ENCODE measurements at regions of chr4 and their contacts with region 1.

Region 1: GRCh38 chr4:13654158-13654797 is 26.8 kb upstream of the BOD1L1 start:
- DNase-seq: peak; percentile 92

Region 2: DNA sequence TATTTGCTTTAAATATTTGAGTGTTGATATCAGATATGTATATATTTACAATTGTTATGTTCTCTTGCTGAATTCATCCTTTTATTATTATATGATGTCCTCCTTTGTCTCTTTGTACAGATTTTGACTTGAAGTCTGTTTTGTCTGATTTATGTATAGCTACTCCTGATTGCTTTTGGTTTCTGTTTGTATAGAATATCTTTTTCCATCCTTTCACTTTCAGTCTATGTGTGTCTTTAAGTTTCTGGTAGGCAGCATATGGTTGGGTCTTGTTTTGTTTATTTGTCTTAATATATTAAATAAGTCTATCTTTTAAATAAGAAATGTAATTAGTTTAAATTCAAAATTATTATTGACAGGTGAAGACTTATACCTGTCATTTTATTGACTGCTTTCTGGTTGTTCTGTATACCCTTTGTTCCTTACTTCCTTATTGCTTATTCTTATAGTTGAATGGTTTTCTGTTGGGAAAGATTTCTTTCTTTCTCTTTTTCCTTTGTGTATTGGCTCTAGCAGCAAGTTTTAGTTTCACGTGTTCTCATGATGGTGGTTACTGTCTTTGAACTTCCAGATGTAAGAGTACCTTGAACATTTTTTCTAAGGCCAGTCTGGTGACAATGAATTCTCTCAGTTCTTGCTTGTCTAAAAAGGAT is 201.2 kb before region 1 on chr4:
- intact Hi-C with region 1: no loop called
- DNase-seq: no peak

Region 3: DNA sequence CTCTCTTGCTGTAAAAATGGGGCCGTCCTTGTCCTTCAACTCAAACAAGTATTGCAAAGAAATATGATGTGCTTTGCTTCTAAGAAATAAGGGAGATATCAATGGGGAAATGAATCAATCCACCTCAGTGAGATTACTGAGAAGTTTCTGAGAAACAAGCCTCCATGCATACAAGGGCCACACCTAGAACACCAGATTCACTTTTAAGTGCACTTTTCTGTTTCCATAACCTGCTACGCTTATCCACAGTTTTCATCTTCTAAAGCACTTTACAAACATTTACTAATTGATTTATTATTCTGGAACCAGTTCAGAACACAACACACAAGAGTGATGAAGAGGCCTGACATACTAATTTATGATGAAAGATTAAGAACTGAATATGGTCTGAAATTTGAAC is 27.3 kb after region 1 on chr4:
- intact Hi-C with region 1: no loop called
- DNase-seq: no peak

Region 4: GRCh38 chr4:13860126-13860525 is 205.8 kb after region 1 on chr4:
- intact Hi-C with region 1: loop called (anchors 2 kb)
- DNase-seq: no peak

Region 5: DNA sequence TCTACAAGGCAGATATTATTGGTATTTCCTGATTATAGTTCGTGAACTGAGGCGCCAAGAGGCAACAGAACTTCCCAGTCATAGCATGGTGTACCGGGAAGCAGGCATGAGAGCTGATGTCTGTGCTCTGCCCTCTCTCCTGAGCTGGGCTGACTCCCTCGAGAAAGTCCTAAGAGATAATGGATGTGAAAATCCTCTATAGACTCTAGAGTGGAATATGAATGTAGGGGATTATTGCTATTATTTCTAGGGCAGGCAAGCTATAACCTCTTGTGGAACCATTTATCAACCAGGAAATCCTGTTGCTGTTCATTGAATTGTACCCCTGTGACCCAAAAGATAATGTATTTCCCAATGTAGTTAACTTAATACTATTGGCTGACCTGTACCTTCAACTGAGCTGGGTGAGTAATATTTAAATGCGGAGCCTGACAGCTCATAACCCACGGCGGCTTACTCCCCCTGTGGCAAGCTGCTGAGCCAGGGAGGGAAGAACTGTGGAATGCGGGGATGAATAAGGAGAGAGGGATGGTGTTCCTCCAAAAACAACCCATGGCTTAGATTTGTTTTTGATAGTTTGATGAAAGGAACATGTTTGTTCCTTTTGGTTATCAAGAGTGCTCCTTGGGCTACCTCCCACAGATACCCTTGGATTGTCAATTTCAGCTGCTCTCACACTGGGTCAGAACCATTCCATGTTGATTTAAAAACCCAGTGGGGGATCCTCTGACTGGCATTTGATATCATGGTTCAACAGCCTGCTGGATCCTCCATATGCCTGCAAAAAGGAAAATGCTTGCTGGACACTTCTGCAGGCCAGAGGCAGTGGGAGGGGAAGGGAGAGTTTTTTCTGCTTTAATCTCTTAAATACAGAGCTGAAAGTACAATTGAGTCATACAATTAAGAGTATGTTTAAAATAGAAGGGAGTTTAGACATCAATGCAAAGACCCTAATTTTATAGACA is 312.2 kb after region 1 on chr4:
- intact Hi-C with region 1: loop called (anchors 10 kb)
- DNase-seq: no peak